SK-N-SH (cell line): ENCODE measurements at regions of chr1 and their contacts with region 1.

Region 1: DNA sequence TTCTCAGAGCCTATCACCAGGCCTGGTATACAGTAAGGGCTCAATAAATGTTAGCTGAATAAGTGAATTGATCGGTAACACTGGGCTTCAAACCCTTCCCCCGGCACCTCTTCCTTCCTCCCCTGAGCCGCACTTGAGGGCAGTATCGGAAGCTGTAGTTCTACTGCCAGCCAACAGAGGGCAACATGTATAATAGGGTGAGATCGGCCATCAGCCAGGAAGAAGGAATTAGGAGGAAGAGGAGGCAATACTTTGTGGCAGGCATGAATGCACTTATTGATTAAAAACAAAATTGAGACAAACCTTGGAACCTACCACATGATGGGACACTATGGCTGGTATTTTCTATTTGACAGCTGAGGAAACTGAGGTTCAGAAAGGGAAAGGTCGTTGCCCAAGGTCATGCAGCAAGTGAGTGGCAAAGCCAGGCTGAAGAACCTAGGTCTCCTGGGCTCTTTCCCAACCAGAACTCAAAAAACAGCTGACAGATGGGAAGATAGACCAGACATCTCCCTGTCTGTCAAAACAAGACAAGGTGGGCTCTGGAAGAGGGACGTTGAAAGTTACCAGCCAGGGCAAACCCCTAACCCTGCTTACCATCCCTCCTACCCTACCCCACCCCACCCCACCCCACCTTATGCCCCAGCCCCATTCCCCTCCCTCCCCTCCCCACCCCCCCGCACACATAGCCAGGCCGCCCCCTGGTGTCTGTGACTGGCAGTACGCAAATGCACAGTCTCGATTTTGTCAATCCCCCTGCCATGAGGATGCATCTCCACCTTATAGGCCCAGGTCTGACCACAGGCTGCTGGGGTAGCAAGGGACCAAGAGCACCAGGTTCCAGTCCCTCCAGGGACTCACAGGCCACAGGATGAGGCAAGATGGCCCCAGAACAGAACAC is 107.3 kb upstream of the RUNX3 start:
- DNase-seq: peak; percentile 78
- H3K4me3 ChIP-seq: no peak overlapping the region
- H3K27ac ChIP-seq: no peak overlapping the region
- H3K4me1 ChIP-seq: no peaks in the 10 kb centered on the region
- H3K27me3 ChIP-seq: peaks cover 28% of the 10 kb centered on the region; the same call in 1 of the 2 replicates
- CTCF ChIP-seq: peak; percentile 68
- EP300 ChIP-seq: no peak
- RAD21 ChIP-seq: peak; percentile 23

Region 2: GRCh38 chr1:24930204-24931145 is 106.9 kb before region 1 on chr1 and contains the start of gene RUNX3:
- CTCF ChIA-PET with region 1: interaction called, 19 read pairs
- POLR2A ChIA-PET with region 1: no interaction called
- DNase-seq: peak; percentile 80
- H3K4me3 ChIP-seq: no peak within 1 kb of the TSS
- H3K27ac ChIP-seq: no peak within 1 kb of the TSS
- H3K4me1 ChIP-seq: peaks cover 0 to 8% of the 10 kb centered on the region in 2 experiments; a peak in 1 of 4 replicates
- H3K27me3 ChIP-seq: peaks cover 87% of the 10 kb centered on the region
- CTCF ChIP-seq: no peak
- EP300 ChIP-seq: no peak
- RAD21 ChIP-seq: no peak
- polyA plus RNA-seq, gene RUNX3: not detected in 2 replicates

Region 3: DNA sequence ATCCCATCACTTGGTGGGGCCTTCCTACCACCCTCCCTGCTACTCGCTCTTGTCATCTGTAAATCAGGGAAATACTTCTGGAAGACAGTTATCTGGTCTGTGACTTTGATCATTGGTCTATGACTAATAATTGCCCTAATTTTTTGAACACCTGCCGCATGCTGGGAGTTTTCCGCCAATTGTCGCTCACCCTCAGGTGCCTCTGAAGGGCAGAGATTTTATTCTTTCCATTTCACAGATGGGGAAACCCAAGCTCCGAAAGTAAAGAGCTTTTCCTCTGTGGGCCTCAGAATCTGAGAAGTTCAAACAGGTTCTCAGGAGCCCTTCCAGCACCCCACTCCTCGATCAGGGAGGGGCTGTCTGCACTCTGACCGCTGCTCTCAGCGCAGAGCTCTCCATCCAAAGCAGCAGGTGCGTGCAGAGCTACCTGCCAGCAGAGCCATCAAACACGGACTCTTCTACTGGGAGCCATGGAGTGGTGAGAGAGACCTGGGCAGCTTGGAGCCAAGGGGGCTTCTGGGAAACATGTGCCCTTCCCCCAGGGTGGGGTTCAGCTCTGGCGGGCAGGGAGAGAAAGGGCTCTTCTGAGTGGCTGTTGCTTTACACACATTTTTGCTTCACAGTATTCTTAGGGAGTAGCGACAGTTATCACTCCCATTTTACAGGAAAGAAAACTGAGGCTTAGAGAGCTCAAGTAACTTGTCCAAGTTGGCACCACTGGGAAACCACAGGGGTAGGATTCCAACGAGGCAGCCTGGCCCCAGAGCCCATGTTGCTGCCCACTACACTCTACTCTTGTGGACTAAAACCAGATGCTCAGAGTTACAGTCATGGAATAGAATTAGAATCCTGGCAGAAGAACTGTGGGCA is 101.6 kb before region 1 on chr1:
- CTCF ChIA-PET with region 1: interaction called, 19 read pairs
- POLR2A ChIA-PET with region 1: no interaction called
- DNase-seq: no peak
- H3K4me3 ChIP-seq: no peak overlapping the region
- H3K27ac ChIP-seq: no peak overlapping the region
- H3K4me1 ChIP-seq: peaks cover 0 to 8% of the 10 kb centered on the region in 2 experiments; a peak in 1 of 4 replicates
- H3K27me3 ChIP-seq: peaks cover 38% of the 10 kb centered on the region
- CTCF ChIP-seq: no peak
- EP300 ChIP-seq: no peak
- RAD21 ChIP-seq: no peak

Region 4: GRCh38 chr1:25053576-25054250 is 16.3 kb after region 1 on chr1:
- CTCF ChIA-PET with region 1: interaction called, 55 read pairs
- POLR2A ChIA-PET with region 1: interaction called, 4 read pairs
- DNase-seq: no peak
- H3K4me3 ChIP-seq: no peak overlapping the region
- H3K27ac ChIP-seq: no peak overlapping the region
- H3K4me1 ChIP-seq: peaks cover 0 to 29% of the 10 kb centered on the region in 2 experiments; a peak in 1 of 4 replicates
- H3K27me3 ChIP-seq: peaks cover 45% of the 10 kb centered on the region; the same call in 1 of the 2 replicates
- CTCF ChIP-seq: no peak
- EP300 ChIP-seq: no peak
- RAD21 ChIP-seq: no peak

Region 5: DNA sequence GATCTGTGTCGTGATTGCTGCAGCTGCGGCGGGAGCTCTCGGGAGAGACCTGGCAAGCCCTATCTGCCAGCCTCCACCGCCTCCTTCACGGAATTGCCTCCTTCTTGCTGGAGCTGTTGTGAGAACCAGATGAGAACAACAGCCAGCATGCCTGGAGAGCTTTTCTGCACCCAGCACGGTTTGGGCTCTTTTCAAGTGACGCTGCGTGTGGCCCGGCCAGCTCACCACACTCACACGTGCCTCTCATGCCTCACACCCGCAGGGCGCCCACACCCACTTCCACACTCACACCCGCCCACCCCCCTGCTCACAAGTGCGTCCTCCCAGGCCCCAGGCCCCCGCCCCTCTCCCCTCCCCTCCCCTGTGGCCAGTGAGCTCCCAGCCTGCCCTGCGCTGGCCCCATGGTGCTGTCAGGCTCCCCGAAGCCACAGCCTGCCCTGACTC is 28.4 kb after region 1 on chr1:
- CTCF ChIA-PET with region 1: interaction called, 17 read pairs
- POLR2A ChIA-PET with region 1: no interaction called
- DNase-seq: peak; percentile 74
- H3K4me3 ChIP-seq: no peak overlapping the region
- H3K27ac ChIP-seq: peak overlapping the region in 1 of 2 experiments; percentile 74; a peak in 2 of 4 replicates
- H3K4me1 ChIP-seq: peaks cover 0 to 36% of the 10 kb centered on the region in 2 experiments; a peak in 1 of 4 replicates
- H3K27me3 ChIP-seq: peaks cover 4% of the 10 kb centered on the region; the same call in 1 of the 2 replicates
- CTCF ChIP-seq: no peak
- EP300 ChIP-seq: no peak
- RAD21 ChIP-seq: no peak

Region 6: GRCh38 chr1:25099343-25099951 is 62.0 kb after region 1 on chr1:
- CTCF ChIA-PET with region 1: interaction called, 21 read pairs
- POLR2A ChIA-PET with region 1: no interaction called
- DNase-seq: peak; percentile 80
- H3K4me3 ChIP-seq: no peak overlapping the region
- H3K27ac ChIP-seq: peak overlapping the region in 1 of 2 experiments; percentile 92; a peak in 2 of 4 replicates
- H3K4me1 ChIP-seq: peaks cover 0 to 35% of the 10 kb centered on the region in 2 experiments; a peak in 2 of 4 replicates
- H3K27me3 ChIP-seq: peaks cover 17% of the 10 kb centered on the region; the same call in 1 of the 2 replicates
- CTCF ChIP-seq: no peak
- EP300 ChIP-seq: peak in 1 of 2 experiments; percentile 65; a peak in 1 of 4 replicates
- RAD21 ChIP-seq: no peak